ENCODE measurements at regions of chr1 and their contacts with region 1.

Region 1: GRCh38 chr1:235612761-235613160 is 36.8 kb downstream of the GNG4 start:
- DNase-seq: no peak
- H3K4me3 ChIP-seq: no peak overlapping the region
- H3K27ac ChIP-seq: no peak overlapping the region
- H3K4me1 ChIP-seq: peaks cover 4% of the 10 kb centered on the region
- CTCF ChIP-seq: no peak

Region 2: GRCh38 chr1:235468970-235469369 is 143.8 kb before region 1 on chr1:
- CTCF ChIA-PET with region 1: no interaction called
- POLR2A ChIA-PET with region 1: no interaction called
- intact Hi-C with region 1: no loop called
- DNase-seq: no peak
- H3K4me3 ChIP-seq: no peak overlapping the region
- H3K27ac ChIP-seq: no peak overlapping the region
- H3K4me1 ChIP-seq: no peaks in the 10 kb centered on the region
- CTCF ChIP-seq: no peak

Region 3: DNA sequence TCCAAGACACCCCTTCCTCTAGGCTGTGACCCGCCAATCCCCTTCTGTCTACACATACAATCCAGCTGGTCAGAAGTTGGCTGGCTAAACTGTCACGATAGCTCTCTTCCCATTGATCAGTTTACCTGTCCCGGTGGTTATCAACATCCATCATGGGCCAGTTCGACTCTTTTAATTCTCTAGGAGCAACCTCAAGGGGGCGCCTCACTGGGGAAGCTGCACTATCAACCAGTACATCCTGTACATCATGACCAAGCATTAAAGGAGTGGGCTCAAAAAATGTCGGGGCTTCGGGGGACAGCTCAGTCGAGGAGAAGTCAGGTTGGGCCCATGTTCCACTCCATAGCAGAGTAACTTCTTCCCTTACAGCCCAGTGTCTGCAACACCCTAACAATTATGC is 55.3 kb before region 1 on chr1:
- CTCF ChIA-PET with region 1: no interaction called
- POLR2A ChIA-PET with region 1: interaction called, 11 read pairs
- intact Hi-C with region 1: no loop called
- DNase-seq: peak; percentile 6
- H3K4me3 ChIP-seq: no peak overlapping the region
- H3K27ac ChIP-seq: no peak overlapping the region
- H3K4me1 ChIP-seq: no peaks in the 10 kb centered on the region
- CTCF ChIP-seq: peak; percentile 68